AG04450 (cell line): ENCODE measurements at regions of chr18 and their contacts with region 1.

Region 1: DNA sequence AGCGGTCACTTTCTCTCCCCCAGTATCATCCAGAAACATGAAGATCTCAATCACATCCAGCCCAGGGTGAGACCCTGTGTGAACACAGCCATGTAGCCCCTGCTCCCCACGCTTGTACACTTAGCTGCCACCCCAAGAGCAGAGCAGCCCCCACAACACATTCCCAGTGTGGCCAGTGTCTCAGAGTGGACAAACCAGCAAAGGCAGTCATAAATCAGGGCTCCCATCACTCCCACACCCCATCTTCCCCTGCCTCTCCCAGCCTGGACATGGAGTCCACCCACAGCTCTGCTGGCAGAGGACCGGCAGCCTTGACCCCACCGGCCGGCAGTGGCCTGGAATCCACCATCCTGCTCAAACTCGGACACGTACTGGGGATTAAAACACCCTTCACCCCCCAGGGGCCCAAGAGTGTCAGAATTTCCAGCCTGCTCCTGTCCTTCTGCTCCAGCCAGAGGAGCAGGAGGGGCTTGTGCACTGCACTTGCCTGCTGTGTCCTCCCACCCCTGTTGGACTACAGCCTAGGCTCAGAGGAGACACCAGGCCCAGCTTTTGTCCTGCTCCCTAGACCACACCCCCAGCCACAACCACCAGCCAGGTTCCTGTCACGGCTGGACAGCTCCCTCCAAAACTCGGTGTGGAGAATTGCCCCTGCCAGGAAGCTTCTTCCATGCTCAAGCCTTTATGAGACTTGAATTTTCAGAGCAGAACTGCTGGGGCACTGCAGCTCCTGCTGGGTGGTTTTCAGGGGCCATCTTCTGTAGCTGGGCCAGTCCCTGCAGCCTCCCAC is 206.1 kb downstream of the SMAD2 start:
- DNase-seq: no peak
- H3K4me3 ChIP-seq: no peak overlapping the region
- H3K27ac ChIP-seq: no peak overlapping the region
- H3K27me3 ChIP-seq: no peaks in the 10 kb centered on the region
- CTCF ChIP-seq: no peak

Region 2: DNA sequence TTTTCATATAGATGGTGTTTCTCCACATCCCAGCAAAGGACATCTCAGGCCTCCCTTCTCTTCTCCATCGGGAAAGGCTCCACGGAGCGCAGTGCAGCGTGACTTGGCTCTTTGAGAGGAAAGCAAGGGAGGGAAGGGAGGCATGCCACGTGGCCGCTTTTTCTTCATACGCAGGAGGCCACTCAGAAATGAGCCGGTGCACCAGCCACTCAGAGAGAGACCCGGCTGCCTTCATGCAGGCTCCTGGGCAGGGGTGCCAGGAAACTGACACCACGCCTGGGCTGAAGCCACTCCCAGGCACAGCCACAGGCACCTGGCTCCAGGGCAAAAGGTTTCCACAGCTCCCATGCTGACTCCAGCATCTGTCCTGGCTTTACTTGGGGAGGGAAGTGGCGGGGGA is 1056.2 kb before region 1 on chr18:
- CTCF ChIA-PET with region 1: interaction called, 11 read pairs
- POLR2A ChIA-PET with region 1: no interaction called
- DNase-seq: no peak
- H3K4me3 ChIP-seq: no peak overlapping the region
- H3K27ac ChIP-seq: no peak overlapping the region
- H3K27me3 ChIP-seq: peaks cover 3% of the 10 kb centered on the region
- CTCF ChIP-seq: no peak

Region 3: GRCh38 chr18:47669815-47670214 is 54.6 kb before region 1 on chr18:
- CTCF ChIA-PET with region 1: no interaction called
- POLR2A ChIA-PET with region 1: no interaction called
- DNase-seq: no peak
- H3K4me3 ChIP-seq: no peak overlapping the region
- H3K27ac ChIP-seq: no peak overlapping the region
- H3K27me3 ChIP-seq: no peaks in the 10 kb centered on the region
- CTCF ChIP-seq: no peak

Region 4: DNA sequence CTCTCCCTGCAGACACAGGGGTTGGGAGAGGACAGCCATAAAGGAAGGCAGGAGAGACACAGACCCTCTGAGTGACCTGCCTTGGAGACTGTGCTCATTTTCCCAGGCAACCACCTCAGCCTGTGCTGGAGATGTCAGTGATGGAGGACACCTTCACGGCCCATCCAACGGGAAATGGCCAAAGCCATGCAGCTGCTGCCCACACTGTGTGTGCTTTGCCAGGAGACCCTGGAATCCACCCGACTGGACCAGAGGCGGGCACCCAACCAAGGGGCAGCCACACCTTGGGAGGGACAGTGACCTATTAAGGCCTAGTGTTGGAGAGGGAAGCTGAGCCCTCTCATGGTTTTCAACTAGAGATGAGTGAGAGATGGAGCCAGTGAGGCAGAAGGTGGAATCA is 13.6 kb after region 1 on chr18:
- CTCF ChIA-PET with region 1: no interaction called
- POLR2A ChIA-PET with region 1: no interaction called
- DNase-seq: no peak
- H3K4me3 ChIP-seq: no peak overlapping the region
- H3K27ac ChIP-seq: no peak overlapping the region
- H3K27me3 ChIP-seq: no peaks in the 10 kb centered on the region
- CTCF ChIP-seq: no peak